ENCODE measurements at regions of chr4 and their contacts with region 1.

Region 1: DNA sequence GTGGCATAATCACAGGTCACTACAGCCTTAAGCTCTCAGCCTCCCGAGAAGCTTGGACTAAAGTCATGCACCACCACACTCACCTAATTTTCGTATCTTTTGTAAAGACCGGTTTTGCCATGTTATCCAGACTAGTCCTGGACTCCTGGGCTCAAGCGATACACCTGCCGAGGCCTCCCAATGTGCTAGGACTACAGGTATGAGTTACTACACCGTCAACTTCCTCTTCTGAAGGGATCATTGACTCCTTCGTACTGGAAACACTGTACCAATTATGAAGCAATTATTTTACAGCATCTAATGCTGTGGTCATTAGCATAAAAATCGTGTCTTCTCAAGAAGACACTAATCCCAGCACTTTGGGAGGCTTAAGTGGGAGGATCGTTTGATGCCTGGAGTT is 35.2 kb downstream of the PDS5A start:
- DNase-seq: peak; percentile 47
- ATAC-seq: no peak
- H3K4me3 ChIP-seq: peak overlapping the region in 2 of 5 experiments; percentile 4 to 28
- H3K4me3 Mint-ChIP-seq: peak overlapping the region; percentile 40
- H3K27ac ChIP-seq: peak overlapping the region; percentile 23 to 55
- H3K27ac Mint-ChIP-seq: peak overlapping the region; percentile 23
- H3K4me1 ChIP-seq: peaks cover 47 to 59% of the 10 kb centered on the region in 2 donors
- H3K4me1 Mint-ChIP-seq: peaks cover 72% of the 10 kb centered on the region
- H3K27me3 ChIP-seq: no peaks in the 10 kb centered on the region
- H3K27me3 Mint-ChIP-seq: no peaks in the 10 kb centered on the region
- CTCF ChIP-seq: no peak

Region 2: GRCh38 chr4:39970671-39971640 is 28.4 kb after region 1 on chr4:
- CTCF ChIA-PET with region 1: interaction called, 4 read pairs
- POLR2A ChIA-PET with region 1: interaction called, 5 read pairs
- intact Hi-C with region 1: loop called (anchors 2 kb)
- DNase-seq: peak; percentile 58
- ATAC-seq: peak; percentile 92
- H3K4me3 ChIP-seq: no peak overlapping the region
- H3K4me3 Mint-ChIP-seq: peak overlapping the region; percentile 69
- H3K27ac ChIP-seq: peak overlapping the region; percentile 51 to 68
- H3K27ac Mint-ChIP-seq: peak overlapping the region; percentile 88
- H3K4me1 ChIP-seq: peaks cover 22 to 23% of the 10 kb centered on the region in 2 donors
- H3K4me1 Mint-ChIP-seq: peaks cover 54% of the 10 kb centered on the region
- H3K27me3 ChIP-seq: no peaks in the 10 kb centered on the region
- H3K27me3 Mint-ChIP-seq: no peaks in the 10 kb centered on the region
- CTCF ChIP-seq: no peak